HepG2 (cell line): ENCODE measurements at regions of chr10 and their contacts with region 1.

Region 1: GRCh38 chr10:20768843-20769242 is 128.3 kb downstream of the NEBL start:
- DNase-seq: no peak
- ATAC-seq: no peak
- H3K4me3 ChIP-seq: no peak overlapping the region
- H3K27ac ChIP-seq: no peak overlapping the region
- H3K4me1 ChIP-seq: no peaks in the 10 kb centered on the region
- H3K27me3 ChIP-seq: no peaks in the 10 kb centered on the region
- CTCF ChIP-seq: 0 out of 2 replicates have a peak, but pooled peaks have one; percentile 9
- EP300 ChIP-seq: no peak
- POLR2A ChIP-seq: no peak
- RAD21 ChIP-seq: no peak

Region 2: GRCh38 chr10:19819419-19820033 is 949.3 kb before region 1 on chr10:
- CTCF ChIA-PET with region 1: no interaction called
- POLR2A ChIA-PET with region 1: no interaction called
- in situ Hi-C with region 1: no loop called
- intact Hi-C with region 1: loop called (anchors 5 kb)
- DNase-seq: peak; percentile 55
- ATAC-seq: no peak
- H3K4me3 ChIP-seq: no peak overlapping the region
- H3K27ac ChIP-seq: no peak overlapping the region
- H3K4me1 ChIP-seq: peaks cover 11% of the 10 kb centered on the region; the same call in 1 of the 2 replicates
- H3K27me3 ChIP-seq: peaks cover 3 to 22% of the 10 kb centered on the region in 2 experiments; a peak in 3 of 5 replicates
- CTCF ChIP-seq: peak; percentile 67
- EP300 ChIP-seq: no peak
- POLR2A ChIP-seq: no peak
- RAD21 ChIP-seq: peak; percentile 30; the same call in 1 of the 2 replicates

Region 3: GRCh38 chr10:21015851-21016250 is 247.0 kb after region 1 on chr10:
- CTCF ChIA-PET with region 1: no interaction called
- POLR2A ChIA-PET with region 1: no interaction called
- in situ Hi-C with region 1: no loop called
- intact Hi-C with region 1: no loop called
- DNase-seq: no peak
- ATAC-seq: no peak
- H3K4me3 ChIP-seq: no peak overlapping the region
- H3K27ac ChIP-seq: no peak overlapping the region
- H3K4me1 ChIP-seq: no peaks in the 10 kb centered on the region
- H3K27me3 ChIP-seq: peaks cover 0 to 27% of the 10 kb centered on the region in 2 experiments; a peak in 2 of 5 replicates
- CTCF ChIP-seq: no peak
- EP300 ChIP-seq: no peak
- POLR2A ChIP-seq: no peak
- RAD21 ChIP-seq: no peak